Left lung (tissue), 14 donors: ENCODE measurements at regions of chr22 and their contacts with region 1.

Region 1: GRCh38 chr22:36846949-36847348 is 13.9 kb upstream of the NCF4 start:
- DNase-seq: no peak
- ATAC-seq: no peak
- H3K4me3 ChIP-seq: no peak overlapping the region
- H3K27ac ChIP-seq: no peak overlapping the region
- H3K4me1 ChIP-seq: no peaks in the 10 kb centered on the region
- H3K27me3 ChIP-seq: peaks cover 7 to 68% of the 10 kb centered on the region in 2 donors
- CTCF ChIP-seq: no peak

Region 2: DNA sequence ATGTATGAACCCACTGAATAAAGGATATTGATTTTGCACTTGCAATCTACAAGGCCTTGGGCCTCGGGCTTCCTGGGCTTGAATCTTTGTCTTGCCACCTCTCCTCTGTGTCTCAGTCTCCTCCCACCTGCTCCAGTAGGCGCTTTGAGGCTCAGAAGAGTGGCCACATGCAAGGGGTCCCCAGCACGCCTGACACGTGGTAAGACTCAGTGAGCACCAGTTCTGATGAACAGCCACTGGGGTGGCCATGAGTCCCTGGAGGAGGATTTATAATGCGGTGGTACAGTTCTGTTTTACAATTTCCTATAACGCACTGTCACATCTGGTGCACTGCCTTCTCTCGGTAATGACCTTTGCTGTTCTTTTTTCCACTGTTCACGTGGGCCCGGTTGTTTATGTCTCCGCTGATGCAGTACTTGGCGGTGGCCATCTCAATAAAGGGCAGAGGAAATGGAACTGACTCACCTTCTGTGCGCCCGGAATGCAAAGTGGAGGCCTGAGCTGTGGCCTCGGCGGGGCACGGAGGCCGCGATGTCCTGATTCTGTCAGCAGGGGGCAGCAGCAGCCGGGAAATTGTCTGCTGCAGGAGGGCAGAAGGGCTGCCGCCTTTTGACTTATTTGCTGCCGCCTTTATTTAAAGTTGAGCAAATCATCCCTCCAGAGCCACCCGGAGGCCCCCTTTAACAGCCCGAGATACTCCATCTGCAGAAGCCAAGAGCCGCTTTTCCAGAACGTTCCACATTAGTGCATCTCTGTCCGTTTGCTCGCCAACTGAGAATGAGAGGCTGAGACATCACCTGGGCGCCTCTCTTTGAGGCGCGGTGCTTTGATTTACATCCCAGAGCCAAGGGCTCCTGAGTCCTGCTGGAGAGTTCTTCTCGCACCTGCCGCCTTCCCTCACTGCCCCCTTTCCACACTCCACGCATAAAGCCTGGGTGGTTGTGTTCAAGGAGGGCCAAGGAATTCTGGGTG is 65.0 kb before region 1 on chr22:
- intact Hi-C with region 1: loop called in 1 of 2 experiments (anchors 5 kb)
- DNase-seq: peak; percentile 40 to 95 (median 75)
- ATAC-seq: peak; percentile 99
- H3K4me3 ChIP-seq: no peak overlapping the region
- H3K27ac ChIP-seq: no peak overlapping the region
- H3K4me1 ChIP-seq: peaks cover 0 to 11% of the 10 kb centered on the region in 2 donors
- H3K27me3 ChIP-seq: peaks cover 0 to 40% of the 10 kb centered on the region in 2 donors
- CTCF ChIP-seq: peak; percentile 82 to 98